ENCODE measurements at regions of chr11 and their contacts with region 1.

Region 1: DNA sequence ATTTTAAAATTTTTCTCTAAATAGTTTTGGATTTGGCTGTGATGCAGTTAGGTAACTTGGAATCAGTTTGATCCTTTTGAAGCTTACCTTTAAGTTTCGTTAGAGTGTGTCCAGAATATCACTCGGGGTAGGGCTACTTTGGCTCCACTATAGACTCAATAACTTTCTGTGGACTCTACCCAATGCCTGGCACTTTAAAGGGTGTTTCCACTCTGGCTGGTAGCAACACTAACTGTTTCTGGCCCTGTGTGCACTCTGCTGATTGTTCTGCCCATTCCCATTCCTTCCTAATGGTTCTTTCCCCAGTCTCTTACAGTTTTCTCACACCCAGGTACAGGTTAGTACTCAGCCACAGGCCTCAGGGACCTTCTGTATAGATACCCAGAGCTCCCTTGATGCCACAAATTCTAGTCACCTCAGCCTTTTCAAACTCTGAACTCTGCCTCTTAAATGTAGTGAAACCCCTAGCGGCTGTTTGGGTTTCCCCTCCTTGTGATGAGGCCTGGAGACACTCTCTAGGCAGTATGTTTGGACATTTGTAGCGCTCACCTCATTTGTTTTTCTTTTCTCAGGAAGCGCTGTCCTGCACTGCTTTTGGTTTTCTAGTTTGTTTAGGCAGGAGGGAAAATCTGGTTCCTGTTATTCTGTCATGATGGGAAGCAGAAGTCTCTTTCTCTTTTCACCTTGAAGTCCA is 16.8 kb downstream of the CUL5 start:
- DNase-seq: no peak
- H3K4me3 ChIP-seq: no peak overlapping the region
- H3K27ac ChIP-seq: no peak overlapping the region
- H3K4me1 ChIP-seq: no peaks in the 10 kb centered on the region
- H3K27me3 ChIP-seq: no peaks in the 10 kb centered on the region
- CTCF ChIP-seq: no peak

Region 2: GRCh38 chr11:108147150-108147549 is 121.6 kb after region 1 on chr11:
- CTCF ChIA-PET with region 1: no interaction called
- POLR2A ChIA-PET with region 1: interaction called, 25 read pairs
- intact Hi-C with region 1: no loop called
- DNase-seq: no peak
- H3K4me3 ChIP-seq: no peak overlapping the region
- H3K27ac ChIP-seq: no peak overlapping the region
- H3K4me1 ChIP-seq: no peaks in the 10 kb centered on the region
- H3K27me3 ChIP-seq: no peaks in the 10 kb centered on the region
- CTCF ChIP-seq: no peak

Region 3: GRCh38 chr11:108237058-108237481 is 211.5 kb after region 1 on chr11:
- CTCF ChIA-PET with region 1: no interaction called
- POLR2A ChIA-PET with region 1: no interaction called
- intact Hi-C with region 1: no loop called
- DNase-seq: no peak
- H3K4me3 ChIP-seq: no peak overlapping the region
- H3K27ac ChIP-seq: no peak overlapping the region
- H3K4me1 ChIP-seq: no peaks in the 10 kb centered on the region
- H3K27me3 ChIP-seq: no peaks in the 10 kb centered on the region
- CTCF ChIP-seq: no peak